ENCODE measurements at regions of chr12 and their contacts with region 1.

Region 1: GRCh38 chr12:110501752-110502738 is at the starts of genes RAD9B and VPS29:
- DNase-seq: peak; percentile 100
- H3K4me3 Mint-ChIP-seq: peak within 1 kb of the TSS; percentile 99
- H3K27ac Mint-ChIP-seq: peak within 1 kb of the TSS; percentile 97
- H3K4me1 Mint-ChIP-seq: peaks cover 30% of the 10 kb centered on the region
- H3K27me3 Mint-ChIP-seq: no peaks in the 10 kb centered on the region
- total RNA-seq, gene RAD9B: 1.1 to 2.7 TPM
- total RNA-seq, gene VPS29: 100 to 106 TPM

Region 2: DNA sequence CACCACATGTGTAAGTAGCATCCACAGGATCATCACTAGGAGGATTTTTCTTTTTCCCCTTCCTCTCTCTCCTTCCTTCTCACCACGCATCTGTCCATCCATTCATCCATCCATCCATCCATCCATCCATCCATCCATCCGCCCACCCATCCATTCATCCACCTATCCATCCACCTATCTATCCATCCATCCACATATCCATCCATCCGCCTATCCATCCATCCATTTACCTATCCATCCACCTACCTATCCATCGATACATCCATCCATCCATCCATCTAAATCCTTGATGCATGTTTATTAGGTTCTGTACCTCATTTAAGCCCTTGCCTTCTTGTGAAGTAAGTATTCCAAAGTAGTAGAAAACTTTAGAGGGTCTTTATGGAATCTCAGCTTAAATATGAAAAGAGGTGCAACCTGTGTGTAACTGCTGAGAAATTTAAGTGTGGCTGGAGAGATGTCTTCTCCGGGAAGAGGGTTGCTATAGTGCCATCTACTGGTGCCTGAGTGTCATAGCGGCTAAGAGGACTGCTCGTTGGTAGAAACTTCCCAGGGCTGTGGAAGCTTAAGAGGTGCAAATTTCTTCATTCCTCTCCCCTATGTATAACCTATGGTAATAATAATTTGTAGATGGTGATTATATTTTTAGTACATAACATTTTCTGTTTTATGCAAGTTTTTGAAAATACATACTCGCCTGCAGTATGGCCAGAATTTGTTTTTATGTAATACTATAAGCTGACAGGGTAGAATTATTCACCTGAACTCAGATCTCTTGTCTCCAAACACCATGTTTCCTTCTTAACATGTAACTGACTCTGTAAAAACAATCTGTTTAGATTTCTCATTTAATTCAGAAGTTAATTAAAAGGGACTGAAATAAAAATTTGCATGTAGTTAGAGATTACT is 1108.4 kb before region 1 on chr12:
- CTCF ChIA-PET with region 1: no interaction called
- POLR2A ChIA-PET with region 1: no interaction called
- intact Hi-C with region 1: no loop called
- DNase-seq: peak; percentile 45
- H3K4me3 Mint-ChIP-seq: no peak overlapping the region
- H3K27ac Mint-ChIP-seq: no peak overlapping the region
- H3K4me1 Mint-ChIP-seq: no peaks in the 10 kb centered on the region
- H3K27me3 Mint-ChIP-seq: peaks cover 19% of the 10 kb centered on the region

Region 3: GRCh38 chr12:110403146-110403975 is 98.7 kb before region 1 on chr12 and contains the start of gene ANAPC7:
- CTCF ChIA-PET with region 1: no interaction called
- POLR2A ChIA-PET with region 1: no interaction called
- intact Hi-C with region 1: loop called (anchors 5 kb)
- DNase-seq: peak; percentile 92
- H3K4me3 Mint-ChIP-seq: peak within 1 kb of the TSS; percentile 99
- H3K27ac Mint-ChIP-seq: peak within 1 kb of the TSS; percentile 99
- H3K4me1 Mint-ChIP-seq: peaks cover 23% of the 10 kb centered on the region
- H3K27me3 Mint-ChIP-seq: no peaks in the 10 kb centered on the region
- total RNA-seq, gene ANAPC7: 47.3 to 52.9 TPM

Region 4: DNA sequence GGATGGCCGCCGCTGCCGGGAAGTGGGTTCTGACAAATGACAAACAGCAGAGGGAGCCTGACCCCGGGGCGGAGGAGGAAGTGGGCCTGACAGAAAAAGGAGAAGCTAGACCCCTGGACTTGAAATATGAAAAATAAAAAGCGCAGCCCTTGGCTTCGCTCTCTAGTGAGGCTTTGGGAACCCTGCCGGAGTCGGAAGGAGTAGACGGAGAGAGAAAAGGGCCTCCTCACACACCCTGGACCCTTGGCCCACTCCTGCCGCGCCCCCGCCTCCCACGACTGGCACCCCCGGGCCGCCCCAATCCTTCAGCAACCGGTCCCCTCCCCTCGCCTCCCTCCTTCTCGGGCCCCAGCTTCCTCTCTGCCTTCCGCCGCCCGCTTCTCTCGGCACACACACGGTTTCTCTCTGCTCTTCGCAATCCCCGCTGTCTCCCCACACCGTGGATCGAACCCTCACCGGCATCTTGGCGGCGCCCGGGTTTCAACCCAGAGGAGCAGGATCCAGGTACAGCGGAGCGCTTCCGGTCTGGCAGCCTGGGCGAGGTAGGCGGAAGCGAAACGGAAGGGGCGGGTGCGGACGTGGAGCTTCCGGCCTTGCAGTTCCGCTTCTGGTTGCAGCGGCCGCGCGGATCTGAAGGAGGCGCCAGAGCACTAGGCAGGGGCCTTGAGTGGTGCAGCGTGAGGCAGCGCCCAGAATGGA is 52.1 kb before region 1 on chr12 and contains the start of gene ARPC3:
- CTCF ChIA-PET with region 1: interaction called, 18 read pairs
- POLR2A ChIA-PET with region 1: interaction called, 11 read pairs
- intact Hi-C with region 1: loop called (anchors 1 kb)
- DNase-seq: peak; percentile 97
- H3K4me3 Mint-ChIP-seq: peak within 1 kb of the TSS; percentile 100
- H3K27ac Mint-ChIP-seq: peak within 1 kb of the TSS; percentile 99
- H3K4me1 Mint-ChIP-seq: peaks cover 35% of the 10 kb centered on the region
- H3K27me3 Mint-ChIP-seq: no peaks in the 10 kb centered on the region
- total RNA-seq, gene ARPC3: 340 to 352 TPM

Region 5: GRCh38 chr12:110583137-110584059 is 81.4 kb after region 1 on chr12 and contains the start of gene PPTC7:
- CTCF ChIA-PET with region 1: no interaction called
- POLR2A ChIA-PET with region 1: interaction called, 6 read pairs
- intact Hi-C with region 1: loop called (anchors 1 kb)
- DNase-seq: peak; percentile 99
- H3K4me3 Mint-ChIP-seq: peak within 1 kb of the TSS; percentile 94
- H3K27ac Mint-ChIP-seq: peak within 1 kb of the TSS; percentile 94
- H3K4me1 Mint-ChIP-seq: peaks cover 59% of the 10 kb centered on the region
- H3K27me3 Mint-ChIP-seq: no peaks in the 10 kb centered on the region
- total RNA-seq, gene PPTC7: 36.9 to 37.0 TPM

Region 6: DNA sequence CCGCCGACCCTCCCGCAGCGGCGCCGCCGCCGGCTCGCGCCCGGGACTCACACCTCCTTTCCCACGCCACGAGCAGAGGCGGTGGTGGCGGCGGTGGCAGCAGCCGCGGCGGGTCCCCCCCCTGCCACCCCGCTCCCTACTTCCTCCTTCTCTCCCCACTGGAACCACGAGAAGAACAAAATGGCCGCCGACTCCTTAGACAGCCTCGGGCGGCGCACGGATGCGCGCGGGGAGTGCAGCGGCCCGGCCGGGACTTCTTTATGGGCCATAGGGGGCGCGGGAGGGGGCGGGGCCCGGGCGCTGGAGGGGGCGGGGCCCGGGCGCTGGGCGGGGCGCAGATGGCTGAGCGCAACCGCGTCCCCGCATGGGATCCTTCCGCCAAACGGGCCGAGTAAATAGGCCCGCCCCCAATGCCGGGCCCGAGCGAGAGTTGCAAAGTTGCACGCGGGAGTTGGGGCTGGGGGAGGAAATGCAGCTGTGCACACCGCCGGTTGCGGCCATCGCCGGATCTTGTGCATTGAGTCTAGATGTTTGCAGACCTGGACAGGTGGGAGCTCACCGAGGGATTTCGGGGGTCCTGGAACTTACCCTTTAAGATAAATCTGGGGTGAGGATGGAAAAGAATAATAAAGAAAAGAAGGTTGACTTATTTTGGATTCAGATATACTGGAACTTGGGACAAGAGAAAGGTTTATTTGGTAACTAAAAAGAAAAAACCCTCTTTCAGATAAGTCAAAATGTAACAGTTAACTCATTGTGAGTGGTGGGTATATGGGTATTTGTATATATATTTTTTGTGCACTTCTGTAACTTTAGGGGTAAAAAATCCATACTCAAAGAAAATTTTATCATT is 240.9 kb after region 1 on chr12 and contains the start of gene PPP1CC:
- CTCF ChIA-PET with region 1: no interaction called
- POLR2A ChIA-PET with region 1: no interaction called
- intact Hi-C with region 1: loop called (anchors 1 kb)
- DNase-seq: peak; percentile 94
- H3K4me3 Mint-ChIP-seq: peak within 1 kb of the TSS; percentile 99
- H3K27ac Mint-ChIP-seq: peak within 1 kb of the TSS; percentile 99
- H3K4me1 Mint-ChIP-seq: peaks cover 34% of the 10 kb centered on the region
- H3K27me3 Mint-ChIP-seq: no peaks in the 10 kb centered on the region
- total RNA-seq, gene PPP1CC: 334 to 343 TPM